ENCODE measurements at regions of chr17 and their contacts with region 1.

Region 1: GRCh38 chr17:57130761-57131461 is 45.9 kb downstream of the AKAP1 start:
- DNase-seq: peak; percentile 87

Region 2: GRCh38 chr17:57750109-57750871 is 619.4 kb after region 1 on chr17:
- in situ Hi-C with region 1: loop called (anchors 25 kb)
- DNase-seq: no peak

Measured in SK-MEL-5 (cell line).